Ascending aorta (tissue), 2 donors: ENCODE measurements at regions of chr12 and their contacts with region 1.

Region 1: GRCh38 chr12:38253778-38254177 is 62.8 kb upstream of the ALG10B start:
- DNase-seq: no peak
- H3K4me3 ChIP-seq: no peak overlapping the region
- H3K27ac ChIP-seq: no peak overlapping the region
- H3K4me1 ChIP-seq: no peaks in the 10 kb centered on the region
- H3K27me3 ChIP-seq: no peaks in the 10 kb centered on the region
- CTCF ChIP-seq: no peak

Region 2: GRCh38 chr12:38222011-38222410 is 31.8 kb before region 1 on chr12:
- intact Hi-C with region 1: no loop called
- DNase-seq: no peak
- H3K4me3 ChIP-seq: no peak overlapping the region
- H3K27ac ChIP-seq: no peak overlapping the region
- H3K4me1 ChIP-seq: no peaks in the 10 kb centered on the region
- H3K27me3 ChIP-seq: no peaks in the 10 kb centered on the region
- CTCF ChIP-seq: no peak

Region 3: DNA sequence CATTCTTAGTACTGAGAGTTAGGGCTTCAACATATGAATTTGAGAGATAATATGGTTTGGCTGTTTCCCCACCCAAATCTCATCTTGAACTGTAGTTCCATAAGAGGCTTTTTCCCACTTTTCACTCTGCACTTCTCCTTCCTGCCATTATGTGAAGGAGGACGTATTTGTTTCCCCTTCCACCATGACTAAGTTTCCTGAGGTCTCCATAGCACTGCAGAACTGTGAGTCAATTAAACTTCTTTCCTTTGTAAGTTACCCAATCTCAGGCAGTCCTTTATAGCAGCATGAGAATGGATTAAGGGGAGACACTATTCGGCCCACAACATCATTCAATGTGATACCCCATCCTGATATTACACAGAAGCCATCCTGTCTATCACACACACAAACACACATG is 26.0 kb after region 1 on chr12:
- intact Hi-C with region 1: no loop called
- DNase-seq: no peak
- H3K4me3 ChIP-seq: no peak overlapping the region
- H3K27ac ChIP-seq: no peak overlapping the region
- H3K4me1 ChIP-seq: no peaks in the 10 kb centered on the region
- H3K27me3 ChIP-seq: no peaks in the 10 kb centered on the region
- CTCF ChIP-seq: no peak

Region 4: DNA sequence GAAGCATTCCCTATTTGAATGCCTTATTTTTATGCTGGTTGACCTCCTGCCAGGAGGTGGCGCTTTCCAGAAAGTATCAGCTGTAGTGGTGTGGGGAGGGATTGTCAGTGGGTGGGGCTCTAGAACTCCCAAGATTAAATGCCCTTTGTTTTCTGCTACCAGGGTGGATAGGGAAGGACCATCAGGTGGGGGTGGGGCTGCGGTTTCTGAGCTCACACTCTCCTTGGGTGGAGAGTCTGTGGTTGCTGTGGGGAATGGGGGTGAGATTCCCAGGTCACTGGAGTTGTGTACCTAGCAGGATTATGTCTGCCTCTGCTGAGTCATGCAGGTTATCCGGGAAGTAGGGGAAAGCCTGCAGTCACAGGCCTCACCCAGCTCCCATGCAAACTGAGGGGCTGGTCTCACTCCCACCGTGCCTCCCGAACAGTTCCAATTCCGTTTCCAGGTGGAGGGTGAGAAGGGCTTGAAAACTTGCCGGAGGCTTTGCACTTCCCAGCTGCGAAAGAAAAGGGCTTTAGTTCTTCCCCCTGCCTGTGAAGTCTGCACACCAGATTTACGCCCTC is 131.1 kb after region 1 on chr12:
- intact Hi-C with region 1: loop called (anchors 5 kb)
- DNase-seq: no peak
- H3K4me3 ChIP-seq: no peak overlapping the region
- H3K27ac ChIP-seq: no peak overlapping the region
- H3K4me1 ChIP-seq: no peaks in the 10 kb centered on the region
- H3K27me3 ChIP-seq: no peaks in the 10 kb centered on the region
- CTCF ChIP-seq: no peak

Region 5: GRCh38 chr12:38707648-38708047 is 453.9 kb after region 1 on chr12:
- intact Hi-C with region 1: no loop called
- DNase-seq: no peak
- H3K4me3 ChIP-seq: no peak overlapping the region
- H3K27ac ChIP-seq: no peak overlapping the region
- H3K4me1 ChIP-seq: no peaks in the 10 kb centered on the region
- H3K27me3 ChIP-seq: no peaks in the 10 kb centered on the region
- CTCF ChIP-seq: no peak

Region 6: GRCh38 chr12:38744041-38744440 is 490.3 kb after region 1 on chr12:
- intact Hi-C with region 1: no loop called
- DNase-seq: no peak
- H3K4me3 ChIP-seq: no peak overlapping the region
- H3K27ac ChIP-seq: no peak overlapping the region
- H3K4me1 ChIP-seq: no peaks in the 10 kb centered on the region
- H3K27me3 ChIP-seq: no peaks in the 10 kb centered on the region
- CTCF ChIP-seq: no peak